ENCODE measurements at regions of chr17 and their contacts with region 1.

Region 1: GRCh38 chr17:41665566-41666236 is 23.0 kb upstream of the EIF1 start:
- DNase-seq: peak; percentile 96
- ATAC-seq: peak; percentile 72
- H3K4me3 ChIP-seq: peak overlapping the region; percentile 30 to 89 (median 62)
- H3K4me3 Mint-ChIP-seq: peak overlapping the region; percentile 94
- H3K27ac ChIP-seq: peak overlapping the region; percentile 99
- H3K27ac Mint-ChIP-seq: peak overlapping the region; percentile 99
- H3K4me1 ChIP-seq: peaks cover 12 to 41% of the 10 kb centered on the region in 2 donors
- H3K4me1 Mint-ChIP-seq: peaks cover 38% of the 10 kb centered on the region
- H3K27me3 ChIP-seq: no peaks in the 10 kb centered on the region
- H3K27me3 Mint-ChIP-seq: no peaks in the 10 kb centered on the region
- CTCF ChIP-seq: peak; percentile 96

Region 2: GRCh38 chr17:40362696-40363110 is 1303.0 kb before region 1 on chr17:
- CTCF ChIA-PET with region 1: interaction called, 8 read pairs
- POLR2A ChIA-PET with region 1: interaction called, 3 read pairs
- intact Hi-C with region 1: loop called (anchors 2 kb)
- DNase-seq: peak; percentile 86
- ATAC-seq: peak; percentile 80
- H3K4me3 ChIP-seq: peak overlapping the region in 4 of 5 experiments; percentile 28 to 58 (median 52)
- H3K4me3 Mint-ChIP-seq: peak overlapping the region; percentile 85
- H3K27ac ChIP-seq: no peak overlapping the region
- H3K27ac Mint-ChIP-seq: peak overlapping the region; percentile 34
- H3K4me1 ChIP-seq: peaks cover 15 to 17% of the 10 kb centered on the region in 2 donors
- H3K4me1 Mint-ChIP-seq: peaks cover 12% of the 10 kb centered on the region
- H3K27me3 ChIP-seq: peaks cover 0 to 34% (median 8%) of the 10 kb centered on the region in 4 experiments
- H3K27me3 Mint-ChIP-seq: peaks cover 12% of the 10 kb centered on the region
- CTCF ChIP-seq: peak; percentile 70

Region 3: DNA sequence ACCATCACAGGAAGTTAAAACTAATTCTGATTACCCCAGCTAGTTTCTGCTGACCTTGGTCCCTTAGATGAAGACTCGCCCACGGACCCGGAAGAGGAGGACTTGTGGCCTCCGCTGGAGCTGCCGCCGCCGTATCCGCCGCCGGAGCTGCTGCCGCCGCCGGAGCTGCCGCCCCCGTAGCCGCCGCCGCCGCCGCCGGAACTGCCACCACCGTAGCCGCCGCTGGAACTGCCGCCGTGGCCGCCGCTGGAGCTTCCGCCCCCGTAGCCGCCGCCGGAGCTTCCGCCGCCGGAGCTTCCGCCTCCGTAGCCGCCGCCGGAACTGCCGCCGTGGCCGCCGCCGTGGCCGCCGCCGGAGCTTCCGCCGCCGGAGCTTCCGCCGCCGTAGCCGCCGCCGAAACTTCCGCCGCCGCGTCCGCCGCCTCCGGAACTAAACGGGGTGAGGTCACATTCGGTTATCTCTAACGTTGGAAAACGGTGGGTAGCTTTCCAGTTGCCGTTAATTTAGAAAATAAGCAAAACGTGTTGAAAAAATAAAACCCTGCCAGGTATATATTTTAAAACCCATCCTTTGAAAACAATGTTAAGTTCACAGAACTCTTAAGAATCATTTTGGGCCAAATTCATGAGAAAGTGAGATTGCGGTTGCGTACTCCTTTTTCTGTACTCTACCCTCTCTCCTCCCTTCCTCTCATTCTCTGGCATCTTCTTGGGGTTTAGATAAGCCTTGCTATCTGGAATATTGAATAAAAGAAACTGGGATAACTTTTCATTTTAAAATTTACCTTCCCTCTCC is 846.8 kb before region 1 on chr17:
- CTCF ChIA-PET with region 1: interaction called, 8 read pairs
- POLR2A ChIA-PET with region 1: interaction called, 5 read pairs
- intact Hi-C with region 1: loop called (anchors 5 kb)
- DNase-seq: peak; percentile 95
- ATAC-seq: peak; percentile 91
- H3K4me3 ChIP-seq: peak overlapping the region; percentile 50 to 95 (median 71)
- H3K4me3 Mint-ChIP-seq: peak overlapping the region; percentile 89
- H3K27ac ChIP-seq: peak overlapping the region; percentile 68 to 86
- H3K27ac Mint-ChIP-seq: peak overlapping the region; percentile 85
- H3K4me1 ChIP-seq: peaks cover 8 to 13% of the 10 kb centered on the region in 2 donors
- H3K4me1 Mint-ChIP-seq: peaks cover 18% of the 10 kb centered on the region
- H3K27me3 ChIP-seq: peaks cover 0 to 6% (median 0%) of the 10 kb centered on the region in 4 experiments
- H3K27me3 Mint-ChIP-seq: peaks cover 16% of the 10 kb centered on the region
- CTCF ChIP-seq: no peak

Region 4: DNA sequence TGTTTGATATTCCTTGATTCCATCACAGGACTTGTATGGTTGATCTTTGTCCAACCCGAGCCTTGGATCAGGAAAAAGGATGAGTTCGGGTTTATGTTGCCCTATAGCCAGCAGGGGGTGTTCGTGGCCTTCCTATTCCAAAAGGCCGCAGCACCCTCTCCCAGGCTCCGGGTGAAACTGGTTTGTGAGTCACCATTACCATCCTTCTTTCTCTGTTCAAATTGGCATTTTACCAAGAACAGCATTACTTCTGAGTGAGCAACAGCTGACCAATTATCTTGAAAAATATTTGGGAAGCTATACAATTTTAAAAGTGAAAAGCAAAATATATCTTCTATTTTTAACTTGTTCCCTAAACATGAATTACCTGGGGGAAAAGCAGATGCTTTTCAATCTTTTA is 756.4 kb before region 1 on chr17:
- CTCF ChIA-PET with region 1: interaction called, 24 read pairs
- POLR2A ChIA-PET with region 1: no interaction called
- intact Hi-C with region 1: loop called (anchors 1 kb)
- DNase-seq: peak; percentile 78
- ATAC-seq: peak; percentile 70
- H3K4me3 ChIP-seq: no peak overlapping the region
- H3K4me3 Mint-ChIP-seq: no peak overlapping the region
- H3K27ac ChIP-seq: no peak overlapping the region
- H3K27ac Mint-ChIP-seq: no peak overlapping the region
- H3K4me1 ChIP-seq: no peaks in the 10 kb centered on the region
- H3K4me1 Mint-ChIP-seq: no peaks in the 10 kb centered on the region
- H3K27me3 ChIP-seq: peaks cover 0 to 17% (median 5%) of the 10 kb centered on the region in 4 experiments
- H3K27me3 Mint-ChIP-seq: peaks cover 49% of the 10 kb centered on the region
- CTCF ChIP-seq: peak; percentile 76

Region 5: GRCh38 chr17:41648411-41649195 is 17.1 kb before region 1 on chr17:
- CTCF ChIA-PET with region 1: interaction called, 438 read pairs
- POLR2A ChIA-PET with region 1: interaction called, 12 read pairs
- intact Hi-C with region 1: loop called (anchors 1 kb)
- DNase-seq: peak; percentile 90
- ATAC-seq: peak; percentile 92
- H3K4me3 ChIP-seq: peak overlapping the region; percentile 23 to 74 (median 55)
- H3K4me3 Mint-ChIP-seq: peak overlapping the region; percentile 60
- H3K27ac ChIP-seq: peak overlapping the region in 1 of 2 donors; percentile 17
- H3K27ac Mint-ChIP-seq: peak overlapping the region; percentile 51
- H3K4me1 ChIP-seq: peaks cover 9 to 18% of the 10 kb centered on the region in 2 donors
- H3K4me1 Mint-ChIP-seq: peaks cover 12% of the 10 kb centered on the region
- H3K27me3 ChIP-seq: peaks cover 0 to 5% (median 1%) of the 10 kb centered on the region in 4 experiments
- H3K27me3 Mint-ChIP-seq: no peaks in the 10 kb centered on the region
- CTCF ChIP-seq: peak; percentile 74

Region 6: DNA sequence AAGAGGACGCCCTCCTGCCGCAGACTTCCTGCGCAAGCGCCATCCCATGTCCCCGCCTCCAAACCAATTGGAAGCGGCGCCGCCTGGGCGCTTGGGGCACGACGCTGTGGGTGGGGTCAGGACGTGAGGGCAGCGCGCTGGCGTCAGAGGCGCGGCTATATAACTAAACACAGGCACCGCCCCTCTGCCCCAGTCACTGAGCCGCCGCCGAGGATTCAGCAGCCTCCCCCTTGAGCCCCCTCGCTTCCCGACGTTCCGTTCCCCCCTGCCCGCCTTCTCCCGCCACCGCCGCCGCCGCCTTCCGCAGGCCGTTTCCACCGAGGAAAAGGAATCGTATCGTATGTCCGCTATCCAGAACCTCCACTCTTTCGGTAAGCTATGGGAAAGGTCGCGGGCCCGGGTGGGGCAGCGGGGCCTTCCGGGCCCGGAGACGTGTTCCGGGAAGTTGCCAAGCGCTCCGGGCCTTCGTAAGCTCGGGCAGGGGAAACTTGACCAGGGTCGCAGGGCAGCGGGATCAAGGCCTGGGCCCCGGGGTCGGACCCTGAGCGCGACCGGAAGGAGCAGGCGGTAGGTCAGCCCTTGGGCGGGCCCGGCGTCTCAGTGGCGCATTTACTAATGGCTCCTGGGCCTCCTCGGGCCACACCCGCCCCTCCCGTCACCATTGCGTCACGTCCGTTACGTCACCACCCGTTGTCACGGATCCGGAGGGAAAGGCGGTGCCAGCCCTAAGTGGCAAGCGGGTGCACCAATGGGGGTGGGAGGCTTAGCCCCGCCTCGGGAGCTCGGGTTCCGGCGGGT is 23.2 kb after region 1 on chr17 and contains the start of gene EIF1:
- CTCF ChIA-PET with region 1: interaction called, 212 read pairs
- POLR2A ChIA-PET with region 1: interaction called, 117 read pairs
- intact Hi-C with region 1: loop called (anchors 1 kb)
- DNase-seq: peak; percentile 100
- ATAC-seq: peak; percentile 75
- H3K4me3 ChIP-seq: peak within 1 kb of the TSS; percentile 81 to 99 (median 87)
- H3K4me3 Mint-ChIP-seq: peak within 1 kb of the TSS; percentile 96
- H3K27ac ChIP-seq: peak within 1 kb of the TSS; percentile 99
- H3K27ac Mint-ChIP-seq: peak within 1 kb of the TSS; percentile 100
- H3K4me1 ChIP-seq: peaks cover 22 to 27% of the 10 kb centered on the region in 2 donors
- H3K4me1 Mint-ChIP-seq: peaks cover 38% of the 10 kb centered on the region
- H3K27me3 ChIP-seq: no peaks in the 10 kb centered on the region
- H3K27me3 Mint-ChIP-seq: no peaks in the 10 kb centered on the region
- CTCF ChIP-seq: no peak
- total RNA-seq, gene EIF1: 753 and 773 TPM in 2 replicates

Measured in B cell (primary cell).